ENCODE measurements at regions of chr2 and their contacts with region 1.

Region 1: GRCh38 chr2:183998041-183998796 is 600.1 kb upstream of the ZNF804A start:
- DNase-seq: peak; percentile 14
- ATAC-seq: peak; percentile 61
- H3K4me3 ChIP-seq: no peak overlapping the region
- H3K27ac ChIP-seq: peak overlapping the region; percentile 36
- H3K4me1 ChIP-seq: peaks cover 48% of the 10 kb centered on the region
- H3K27me3 ChIP-seq: no peaks in the 10 kb centered on the region
- CTCF ChIP-seq: no peak

Region 2: GRCh38 chr2:183292028-183292427 is 706.2 kb before region 1 on chr2:
- CTCF ChIA-PET with region 1: no interaction called
- POLR2A ChIA-PET with region 1: no interaction called
- intact Hi-C with region 1: loop called (anchors 10 kb)
- DNase-seq: no peak
- ATAC-seq: no peak
- H3K4me3 ChIP-seq: no peak overlapping the region
- H3K27ac ChIP-seq: no peak overlapping the region
- H3K4me1 ChIP-seq: peaks cover 3% of the 10 kb centered on the region; the same call in 1 of the 2 replicates
- H3K27me3 ChIP-seq: no peaks in the 10 kb centered on the region
- CTCF ChIP-seq: no peak

Region 3: DNA sequence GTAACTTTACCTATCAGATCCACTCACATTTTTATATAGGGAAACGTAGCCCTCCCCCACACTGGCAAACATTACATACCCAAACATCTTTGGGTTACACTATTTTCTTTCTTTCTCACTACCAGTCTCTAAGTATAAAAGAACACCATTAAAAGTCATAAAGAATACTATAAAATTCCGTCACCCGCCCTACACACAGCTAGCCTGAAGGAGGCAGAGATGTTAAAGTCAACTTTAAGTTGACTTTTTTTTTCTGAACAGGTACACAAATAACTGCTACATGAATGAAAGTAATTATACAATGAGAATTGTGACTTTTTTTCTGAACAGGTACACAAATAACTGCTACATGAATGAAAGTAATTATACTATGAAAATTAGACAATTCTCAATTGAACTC is 245.6 kb before region 1 on chr2:
- CTCF ChIA-PET with region 1: no interaction called
- POLR2A ChIA-PET with region 1: no interaction called
- intact Hi-C with region 1: loop called (anchors 5 kb)
- DNase-seq: peak; percentile 28
- ATAC-seq: no peak
- H3K4me3 ChIP-seq: no peak overlapping the region
- H3K27ac ChIP-seq: no peak overlapping the region
- H3K4me1 ChIP-seq: no peaks in the 10 kb centered on the region
- H3K27me3 ChIP-seq: no peaks in the 10 kb centered on the region
- CTCF ChIP-seq: peak; percentile 51

Region 4: GRCh38 chr2:184041077-184041476 is 42.9 kb after region 1 on chr2:
- CTCF ChIA-PET with region 1: no interaction called
- POLR2A ChIA-PET with region 1: no interaction called
- intact Hi-C with region 1: no loop called
- DNase-seq: no peak
- ATAC-seq: no peak
- H3K4me3 ChIP-seq: no peak overlapping the region
- H3K27ac ChIP-seq: no peak overlapping the region
- H3K4me1 ChIP-seq: no peaks in the 10 kb centered on the region
- H3K27me3 ChIP-seq: no peaks in the 10 kb centered on the region
- CTCF ChIP-seq: no peak

Region 5: GRCh38 chr2:184053326-184053725 is 55.1 kb after region 1 on chr2:
- CTCF ChIA-PET with region 1: no interaction called
- POLR2A ChIA-PET with region 1: no interaction called
- intact Hi-C with region 1: loop called (anchors 5 kb)
- DNase-seq: peak; percentile 62
- ATAC-seq: peak; percentile 76
- H3K4me3 ChIP-seq: no peak overlapping the region
- H3K27ac ChIP-seq: no peak overlapping the region
- H3K4me1 ChIP-seq: peaks cover 9% of the 10 kb centered on the region
- H3K27me3 ChIP-seq: no peaks in the 10 kb centered on the region
- CTCF ChIP-seq: no peak

Measured in PC-3 (cell line).